ENCODE measurements at regions of chr14 and their contacts with region 1.

Region 1: DNA sequence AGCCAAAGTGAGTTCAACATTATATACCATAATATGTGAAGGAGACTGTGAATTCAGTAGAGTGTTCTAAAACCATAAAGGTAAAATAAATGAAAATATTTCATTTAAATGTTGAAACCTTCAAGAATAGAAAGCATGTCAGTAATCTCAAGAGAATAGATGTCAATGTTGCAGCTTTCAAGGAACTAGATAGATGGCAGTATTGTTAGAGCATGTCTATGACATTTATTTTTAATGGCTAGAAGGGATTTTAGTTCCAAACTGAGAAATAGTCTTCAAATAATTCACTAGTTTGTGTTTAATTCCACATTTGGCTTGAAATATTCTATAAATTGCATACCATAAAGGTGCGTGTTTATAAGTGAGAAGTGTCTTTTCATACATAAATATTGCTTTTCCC is 326.5 kb downstream of the FLRT2 start:
- DNase-seq: no peak
- H3K4me3 ChIP-seq: no peak overlapping the region
- H3K27ac ChIP-seq: no peak overlapping the region
- H3K4me1 ChIP-seq: no peaks in the 10 kb centered on the region
- H3K27me3 ChIP-seq: no peaks in the 10 kb centered on the region
- CTCF ChIP-seq: peak; percentile 55

Region 2: GRCh38 chr14:85867450-85867849 is 11.0 kb after region 1 on chr14:
- CTCF ChIA-PET with region 1: no interaction called
- POLR2A ChIA-PET with region 1: no interaction called
- intact Hi-C with region 1: no loop called
- DNase-seq: peak; percentile 21
- H3K4me3 ChIP-seq: no peak overlapping the region
- H3K27ac ChIP-seq: no peak overlapping the region
- H3K4me1 ChIP-seq: no peaks in the 10 kb centered on the region
- H3K27me3 ChIP-seq: no peaks in the 10 kb centered on the region
- CTCF ChIP-seq: peak; percentile 42

Region 3: GRCh38 chr14:86057018-86057667 is 200.7 kb after region 1 on chr14:
- CTCF ChIA-PET with region 1: no interaction called
- POLR2A ChIA-PET with region 1: no interaction called
- intact Hi-C with region 1: loop called (anchors 10 kb)
- DNase-seq: peak; percentile 58
- H3K4me3 ChIP-seq: no peak overlapping the region
- H3K27ac ChIP-seq: no peak overlapping the region
- H3K4me1 ChIP-seq: no peaks in the 10 kb centered on the region
- H3K27me3 ChIP-seq: no peaks in the 10 kb centered on the region
- CTCF ChIP-seq: peak; percentile 84